Heart left ventricle (tissue), 16 donors: ENCODE measurements at regions of chr3 and their contacts with region 1.

Region 1: DNA sequence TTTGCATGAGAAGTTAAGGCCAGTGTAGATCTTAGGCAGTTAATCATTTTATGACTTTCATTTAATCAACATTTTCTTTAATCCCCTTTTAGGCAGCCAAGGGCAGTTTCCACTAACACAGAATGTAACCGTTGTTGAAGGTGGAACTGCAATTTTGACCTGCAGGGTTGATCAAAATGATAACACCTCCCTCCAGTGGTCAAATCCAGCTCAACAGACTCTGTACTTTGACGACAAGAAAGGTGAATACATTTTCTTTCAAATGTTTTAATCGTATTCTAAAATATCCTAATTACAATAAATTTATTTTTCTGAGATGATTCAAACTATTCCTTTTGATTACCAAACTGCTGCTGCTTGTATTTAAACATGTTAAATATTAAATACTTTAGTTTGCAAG is 843.2 kb downstream of the CADM2 start:
- DNase-seq: no peak
- ATAC-seq: no peak
- H3K4me3 ChIP-seq: no peak overlapping the region
- H3K27ac ChIP-seq: no peak overlapping the region
- H3K4me1 ChIP-seq: no peaks in the 10 kb centered on the region
- H3K27me3 ChIP-seq: no peaks in the 10 kb centered on the region
- CTCF ChIP-seq: peak in 9 of 12 donors; percentile 10 to 47 (median 34)
- POLR2A ChIP-seq: no peak

Region 2: DNA sequence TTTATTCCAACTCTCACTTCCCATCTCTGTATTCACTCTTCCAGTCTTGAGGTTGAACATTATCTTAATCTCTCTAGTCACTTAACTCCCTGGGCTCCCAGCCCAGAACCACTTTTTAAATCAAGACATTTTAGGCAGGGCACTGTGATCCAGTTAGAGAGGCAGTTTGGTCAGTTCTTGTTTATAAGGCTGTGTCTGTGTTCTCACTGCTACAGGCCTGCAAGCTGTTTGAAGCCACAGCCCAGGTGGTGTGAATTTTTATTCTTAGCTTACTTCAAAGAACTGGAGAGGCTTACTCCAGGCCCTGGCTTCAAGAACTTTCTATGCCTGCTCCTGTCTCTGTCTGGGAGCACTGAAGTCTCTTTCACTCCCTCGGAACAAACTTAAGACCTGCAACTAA is 62.9 kb after region 1 on chr3:
- intact Hi-C with region 1: loop called in 1 of 10 experiments (anchors 10 kb)
- DNase-seq: no peak
- ATAC-seq: no peak
- H3K4me3 ChIP-seq: no peak overlapping the region
- H3K27ac ChIP-seq: no peak overlapping the region
- H3K4me1 ChIP-seq: no peaks in the 10 kb centered on the region
- H3K27me3 ChIP-seq: no peaks in the 10 kb centered on the region
- CTCF ChIP-seq: no peak
- POLR2A ChIP-seq: no peak